ENCODE measurements at regions of chr6 and their contacts with region 1.

Region 1: GRCh38 chr6:24960991-24961475 is 25.3 kb upstream of the RIPOR2 start:
- DNase-seq: no peak
- ATAC-seq: peak; percentile 14
- H3K4me3 Mint-ChIP-seq: no peak overlapping the region
- H3K27ac Mint-ChIP-seq: peak overlapping the region; percentile 33
- H3K4me1 Mint-ChIP-seq: peaks cover 90% of the 10 kb centered on the region
- H3K27me3 Mint-ChIP-seq: no peaks in the 10 kb centered on the region
- CTCF ChIP-seq: no peak

Region 2: GRCh38 chr6:24949020-24949569 is 11.9 kb before region 1 on chr6:
- CTCF ChIA-PET with region 1: no interaction called
- POLR2A ChIA-PET with region 1: interaction called, 7 read pairs
- intact Hi-C with region 1: loop called (anchors 2 kb)
- DNase-seq: no peak
- ATAC-seq: peak; percentile 80
- H3K4me3 Mint-ChIP-seq: peak overlapping the region; percentile 65
- H3K27ac Mint-ChIP-seq: peak overlapping the region; percentile 94
- H3K4me1 Mint-ChIP-seq: peaks cover 85% of the 10 kb centered on the region
- H3K27me3 Mint-ChIP-seq: no peaks in the 10 kb centered on the region
- CTCF ChIP-seq: no peak

Region 3: GRCh38 chr6:25017932-25018567 is 57.0 kb after region 1 on chr6:
- CTCF ChIA-PET with region 1: no interaction called
- POLR2A ChIA-PET with region 1: no interaction called
- intact Hi-C with region 1: no loop called
- DNase-seq: no peak
- ATAC-seq: peak; percentile 68
- H3K4me3 Mint-ChIP-seq: peak overlapping the region; percentile 32
- H3K27ac Mint-ChIP-seq: peak overlapping the region; percentile 70
- H3K4me1 Mint-ChIP-seq: peaks cover 56% of the 10 kb centered on the region
- H3K27me3 Mint-ChIP-seq: no peaks in the 10 kb centered on the region
- CTCF ChIP-seq: no peak

Region 4: GRCh38 chr6:25103603-25104002 is 142.6 kb after region 1 on chr6:
- CTCF ChIA-PET with region 1: no interaction called
- POLR2A ChIA-PET with region 1: no interaction called
- intact Hi-C with region 1: no loop called
- DNase-seq: no peak
- ATAC-seq: no peak
- H3K4me3 Mint-ChIP-seq: no peak overlapping the region
- H3K27ac Mint-ChIP-seq: no peak overlapping the region
- H3K4me1 Mint-ChIP-seq: peaks cover 17% of the 10 kb centered on the region
- H3K27me3 Mint-ChIP-seq: no peaks in the 10 kb centered on the region
- CTCF ChIP-seq: no peak